T-cell (primary cell): ENCODE measurements at regions of chr15 and their contacts with region 1.

Region 1: DNA sequence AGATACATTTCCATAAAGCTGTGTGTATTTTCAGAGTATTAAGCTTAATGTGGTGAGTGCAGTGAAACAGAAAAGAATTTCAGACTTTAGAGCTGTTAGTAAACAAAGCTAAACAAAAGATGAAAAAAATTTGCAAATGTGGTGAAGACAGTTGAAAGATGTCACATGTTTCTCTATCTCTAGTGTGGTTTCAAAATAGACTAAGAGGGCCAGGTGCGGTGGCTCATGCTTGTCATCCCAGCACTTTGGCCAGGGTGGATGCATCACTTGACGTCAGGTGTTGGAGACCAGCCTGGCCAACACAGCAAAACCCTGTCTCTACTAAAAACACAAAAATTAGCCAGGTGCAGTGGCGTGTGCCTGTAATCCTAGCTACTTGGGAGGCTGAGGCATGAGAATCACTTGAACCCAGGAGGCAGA is 466.0 kb upstream of the NR2F2 start:
- DNase-seq: peak in 10 of 35 experiments; percentile 6 to 48 (median 24)
- ATAC-seq: peak in 1 of 4 experiments; percentile 48
- H3K4me3 ChIP-seq: no peak overlapping the region
- H3K4me3 Mint-ChIP-seq: no peak overlapping the region
- H3K27ac ChIP-seq: no peak overlapping the region
- H3K27ac Mint-ChIP-seq: no peak overlapping the region
- H3K4me1 ChIP-seq: peaks cover 6% of the 10 kb centered on the region in 2 experiments
- H3K4me1 Mint-ChIP-seq: peaks cover 9 to 26% (median 19%) of the 10 kb centered on the region in 3 donors
- H3K27me3 ChIP-seq: no peaks in the 10 kb centered on the region
- H3K27me3 Mint-ChIP-seq: peaks cover 0 to 3% of the 10 kb centered on the region in 2 donors

Region 2: DNA sequence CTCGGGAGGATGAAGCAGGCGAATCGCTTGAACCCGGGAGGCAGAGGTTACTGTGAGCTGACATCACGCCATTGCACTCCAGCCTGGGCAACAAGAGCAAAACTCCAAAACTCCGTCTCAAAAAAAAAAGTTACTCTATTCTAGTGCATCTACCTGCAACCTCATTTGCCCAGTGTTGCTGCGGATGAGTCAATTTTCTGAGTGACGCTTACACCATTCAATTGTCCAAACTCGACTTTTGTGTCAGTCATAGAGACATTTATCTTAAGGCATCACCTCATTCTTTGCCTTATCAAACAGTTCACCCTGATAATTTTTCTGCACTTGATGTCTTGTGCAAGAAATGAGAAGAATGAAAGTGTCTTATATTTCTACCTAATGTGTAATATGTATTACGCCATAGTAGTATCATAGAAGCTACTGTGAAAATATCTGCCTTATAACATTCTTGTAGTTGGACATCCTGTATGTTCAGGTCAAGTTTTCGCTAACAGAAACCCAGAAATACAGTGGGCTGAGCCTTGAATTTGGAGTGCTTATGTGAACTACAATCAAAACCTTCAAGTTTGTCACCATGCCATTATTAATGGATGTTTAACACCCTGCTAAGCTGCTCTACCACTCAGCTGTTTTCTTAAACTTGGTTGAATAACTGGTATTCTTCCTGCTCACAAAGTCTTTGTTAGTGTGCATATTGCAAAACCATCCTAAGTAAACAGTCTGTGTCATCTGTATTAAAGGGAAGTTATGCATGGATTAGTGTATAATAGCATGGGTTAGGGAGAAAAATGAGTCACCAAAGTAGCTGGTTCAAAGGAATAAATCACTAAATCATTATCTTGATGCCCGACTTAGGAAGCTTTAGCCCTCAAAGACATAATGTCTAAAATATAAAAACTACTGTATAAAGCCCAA is 64.9 kb before region 1 on chr15:
- CTCF ChIA-PET with region 1: no interaction called
- POLR2A ChIA-PET with region 1: interaction called in 1 of 2 experiments, 10 read pairs
- DNase-seq: no peak
- ATAC-seq: no peak
- H3K4me3 ChIP-seq: no peak overlapping the region
- H3K4me3 Mint-ChIP-seq: no peak overlapping the region
- H3K27ac ChIP-seq: no peak overlapping the region
- H3K27ac Mint-ChIP-seq: no peak overlapping the region
- H3K4me1 ChIP-seq: no peaks in the 10 kb centered on the region
- H3K4me1 Mint-ChIP-seq: peaks cover 0 to 18% (median 14%) of the 10 kb centered on the region in 3 donors
- H3K27me3 ChIP-seq: no peaks in the 10 kb centered on the region
- H3K27me3 Mint-ChIP-seq: peaks cover 0 to 5% of the 10 kb centered on the region in 2 donors

Region 3: GRCh38 chr15:95816591-95816990 is 47.9 kb before region 1 on chr15:
- CTCF ChIA-PET with region 1: no interaction called
- POLR2A ChIA-PET with region 1: no interaction called
- DNase-seq: no peak
- ATAC-seq: no peak
- H3K4me3 ChIP-seq: no peak overlapping the region
- H3K4me3 Mint-ChIP-seq: no peak overlapping the region
- H3K27ac ChIP-seq: no peak overlapping the region
- H3K27ac Mint-ChIP-seq: no peak overlapping the region
- H3K4me1 ChIP-seq: no peaks in the 10 kb centered on the region
- H3K4me1 Mint-ChIP-seq: no peaks in the 10 kb centered on the region
- H3K27me3 ChIP-seq: no peaks in the 10 kb centered on the region
- H3K27me3 Mint-ChIP-seq: peaks cover 0 to 21% of the 10 kb centered on the region in 2 donors